H1 (cell line): ENCODE measurements at regions of chr19 and their contacts with region 1.

Region 1: DNA sequence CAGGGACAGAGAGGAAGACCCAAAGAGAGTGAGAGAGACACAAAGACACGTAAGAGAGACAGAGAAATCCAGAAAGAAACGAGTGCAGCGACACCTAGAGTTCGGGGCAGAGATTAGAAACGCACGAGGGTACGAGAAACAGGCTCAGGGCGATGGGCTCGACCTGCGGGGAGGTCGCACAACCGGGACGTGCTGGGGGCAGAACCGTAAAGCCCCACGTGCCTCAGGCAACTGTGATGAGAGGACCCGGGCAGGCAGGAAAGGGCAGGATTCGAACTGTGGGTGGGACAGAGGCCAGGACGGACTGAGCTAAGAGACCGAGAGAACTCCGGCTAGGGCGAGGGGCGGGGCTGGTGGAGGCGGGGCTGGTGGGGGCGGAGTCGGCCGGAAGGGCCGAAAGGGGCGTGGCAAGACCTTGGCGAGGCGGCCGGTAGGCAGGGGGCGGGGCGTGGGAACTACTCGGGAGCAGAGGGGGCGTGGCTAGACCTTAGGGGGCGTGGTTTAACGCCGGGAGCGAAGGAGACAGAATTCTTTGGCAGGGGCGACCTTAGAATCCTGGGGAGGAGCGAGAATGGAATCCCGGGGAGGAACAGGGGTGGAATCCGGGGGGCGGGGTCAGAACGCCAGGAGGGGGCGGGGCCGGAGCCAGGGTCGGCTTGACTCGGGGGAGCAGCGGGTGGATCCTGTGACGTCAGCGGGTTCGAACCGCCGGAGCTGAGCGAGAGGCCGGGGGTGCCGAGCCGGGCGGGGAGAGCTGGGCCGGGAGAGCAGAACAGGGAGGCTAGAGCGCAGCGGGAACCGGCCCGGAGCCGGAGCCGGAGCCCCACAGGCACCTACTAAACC is at the start of gene NECTIN2:
- DNase-seq: peak; percentile 97 to 100
- H3K4me3 ChIP-seq: peak within 1 kb of the TSS; percentile 84 to 98 (median 92)
- H3K27ac ChIP-seq: peak within 1 kb of the TSS; percentile 92
- H3K4me1 ChIP-seq: peaks cover 14 to 22% (median 16%) of the 10 kb centered on the region in 4 experiments
- H3K27me3 ChIP-seq: peaks cover 0 to 2% (median 0%) of the 10 kb centered on the region in 4 experiments; a peak in 1 of 7 replicates
- CTCF ChIP-seq: peak; percentile 70 to 97 (median 73)
- EP300 ChIP-seq: 0 out of 3 replicates have a peak, but pooled peaks of 1 of the 2 experiments have one; percentile 32
- POLR2A ChIP-seq: peak; percentile 48 to 87
- RAD21 ChIP-seq: peak; percentile 50 to 60
- total RNA-seq, gene NECTIN2: 181 and 184 TPM in 2 replicates

Region 2: DNA sequence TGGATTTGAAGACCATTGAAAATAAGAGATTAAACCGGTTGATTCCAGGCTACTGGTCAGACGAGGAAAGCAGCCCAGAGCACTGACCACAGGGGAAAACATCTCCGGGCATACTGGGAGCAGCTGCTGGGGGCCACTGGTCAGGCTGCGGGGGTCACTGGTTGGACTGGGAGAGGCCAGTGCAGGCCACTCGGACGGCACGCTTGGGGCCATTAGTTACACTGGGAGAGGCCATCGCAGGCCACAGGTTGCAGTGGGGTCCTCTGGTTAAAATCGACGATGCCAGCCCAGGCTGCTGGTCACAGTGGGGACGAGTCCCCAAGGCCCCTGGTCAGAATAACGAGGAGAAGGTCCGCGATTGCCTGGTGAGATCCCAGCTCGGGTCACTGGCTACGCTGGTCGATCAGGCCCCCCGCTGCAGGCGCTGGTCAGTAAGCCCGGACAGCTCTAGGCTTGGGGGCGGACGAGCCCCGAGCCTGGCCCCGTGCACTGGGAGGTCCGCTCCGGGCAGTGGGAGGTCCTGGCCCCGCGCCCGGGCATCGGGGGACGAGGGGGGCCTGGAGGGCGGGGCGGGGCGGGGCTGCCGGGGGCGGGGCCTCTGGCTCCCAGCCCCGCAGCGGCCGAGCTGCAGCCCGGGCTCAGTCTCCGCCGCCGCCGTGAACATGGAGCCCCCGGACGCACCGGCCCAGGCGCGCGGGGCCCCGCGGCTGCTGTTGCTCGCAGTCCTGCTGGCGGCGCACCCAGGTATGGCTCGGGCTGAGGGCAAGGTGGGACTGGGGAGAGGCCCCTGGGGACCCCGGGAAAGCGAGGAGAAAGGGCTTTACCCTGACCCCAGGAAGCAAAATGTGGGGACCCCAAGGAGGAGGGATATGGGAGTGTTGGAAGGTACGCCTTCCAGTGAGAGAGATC is 37.1 kb before region 1 on chr19 and contains the start of gene BCAM:
- CTCF ChIA-PET with region 1: interaction called, 19 read pairs
- POLR2A ChIA-PET with region 1: interaction called, 15 read pairs
- DNase-seq: peak in 1 of 2 experiments; percentile 87
- H3K4me3 ChIP-seq: peak within 1 kb of the TSS; percentile 64 to 96 (median 70)
- H3K27ac ChIP-seq: peak within 1 kb of the TSS; percentile 91
- H3K4me1 ChIP-seq: peaks cover 4 to 34% (median 21%) of the 10 kb centered on the region in 4 experiments
- H3K27me3 ChIP-seq: peaks cover 0 to 13% (median 11%) of the 10 kb centered on the region in 4 experiments; a peak in 6 of 7 replicates
- CTCF ChIP-seq: no peak
- EP300 ChIP-seq: no peak
- POLR2A ChIP-seq: peak in 1 of 2 experiments; percentile 50; a peak in 2 of 3 replicates
- RAD21 ChIP-seq: no peak
- total RNA-seq, gene BCAM: 81.4 and 83.0 TPM in 2 replicates

Region 3: DNA sequence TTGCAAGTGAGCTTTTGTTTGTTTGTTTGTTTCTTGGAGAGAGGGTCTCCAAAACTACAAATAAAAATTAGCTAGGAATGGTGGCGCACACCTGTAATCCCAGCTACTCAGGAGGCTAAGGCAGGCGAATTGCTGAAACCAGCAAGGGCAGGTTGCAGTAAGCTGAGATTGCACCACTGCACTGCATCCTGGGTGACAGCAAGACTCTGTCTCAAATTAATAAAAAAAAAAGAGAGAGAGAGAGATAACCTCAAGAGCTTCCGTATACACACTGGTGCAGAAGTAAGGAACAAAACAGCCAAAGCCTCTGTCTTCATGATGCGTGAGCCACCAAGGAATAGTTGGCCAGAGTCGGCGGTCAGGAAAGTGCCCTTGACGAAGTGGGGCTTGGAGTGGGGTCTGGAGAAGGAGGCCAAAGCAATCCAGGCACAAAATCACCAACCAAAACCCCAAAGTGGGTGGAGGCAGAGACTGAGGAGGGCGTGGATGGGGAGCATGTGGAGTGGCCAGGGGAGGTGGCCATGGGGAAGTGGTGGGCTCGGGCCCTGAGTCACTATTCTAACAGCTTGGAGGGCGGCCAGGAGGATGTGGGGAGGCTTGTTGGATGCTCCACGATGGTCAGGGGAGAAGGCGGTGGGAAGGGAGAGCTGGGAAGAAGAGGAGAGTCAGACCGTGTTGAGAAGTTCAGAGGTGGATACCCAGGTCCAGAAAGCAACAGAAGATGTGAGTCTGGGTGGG is 24.1 kb after region 1 on chr19:
- CTCF ChIA-PET with region 1: interaction called, 4 read pairs
- POLR2A ChIA-PET with region 1: interaction called, 13 read pairs
- DNase-seq: no peak
- H3K4me3 ChIP-seq: no peak overlapping the region
- H3K27ac ChIP-seq: no peak overlapping the region
- H3K4me1 ChIP-seq: no peaks in the 10 kb centered on the region
- H3K27me3 ChIP-seq: no peaks in the 10 kb centered on the region
- CTCF ChIP-seq: no peak
- EP300 ChIP-seq: no peak
- POLR2A ChIP-seq: no peak
- RAD21 ChIP-seq: no peak

Region 4: DNA sequence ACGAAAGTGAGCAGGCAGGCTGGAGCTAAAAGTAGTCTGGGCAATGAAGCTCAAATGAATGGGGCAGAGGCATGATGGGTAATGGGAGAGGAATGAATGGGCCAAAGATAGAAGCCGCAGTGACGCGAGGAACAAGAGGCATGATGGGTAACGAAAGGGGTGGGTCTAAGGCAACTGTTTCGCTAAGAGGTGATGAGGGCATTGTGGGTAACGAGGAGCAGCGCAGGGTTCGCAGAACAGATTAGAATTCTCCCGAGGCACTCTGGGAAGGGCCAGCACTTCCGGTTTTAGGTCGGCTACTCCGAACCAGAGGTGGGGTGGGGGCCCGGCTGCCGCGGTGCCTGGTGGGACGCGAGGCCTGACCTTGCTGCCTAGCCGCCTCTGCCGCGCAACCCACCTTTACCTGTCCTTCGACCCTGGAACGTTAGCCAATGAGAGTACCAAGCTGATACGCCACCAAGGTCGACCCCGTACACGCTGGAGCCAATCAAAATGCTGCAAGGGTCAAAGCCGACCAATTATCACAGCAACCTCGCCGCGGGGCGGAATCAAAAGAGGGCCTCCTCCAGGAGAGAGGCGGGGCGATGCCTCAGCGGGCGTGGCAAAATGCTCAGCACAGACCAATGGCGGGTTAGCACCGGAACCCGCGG is 44.7 kb after region 1 on chr19:
- CTCF ChIA-PET with region 1: interaction called, 4 read pairs
- POLR2A ChIA-PET with region 1: interaction called, 31 read pairs
- DNase-seq: peak; percentile 99
- H3K4me3 ChIP-seq: peak overlapping the region; percentile 28 to 58 (median 48); a peak in 7 of 8 replicates
- H3K27ac ChIP-seq: peak overlapping the region; percentile 74; the same call in 1 of the 2 replicates
- H3K4me1 ChIP-seq: peaks cover 5 to 8% (median 7%) of the 10 kb centered on the region in 4 experiments
- H3K27me3 ChIP-seq: no peaks in the 10 kb centered on the region
- CTCF ChIP-seq: no peak
- EP300 ChIP-seq: no peak
- POLR2A ChIP-seq: peak; percentile 83 to 92
- RAD21 ChIP-seq: no peak